CD4-positive, alpha-beta memory T cell (primary cell): ENCODE measurements at regions of chr4 and their contacts with region 1.

Region 1: GRCh38 chr4:66300336-66300934 is 630.1 kb upstream of the EPHA5 start:
- DNase-seq: no peak
- H3K4me3 ChIP-seq: no peak overlapping the region
- H3K4me3 Mint-ChIP-seq: no peak overlapping the region
- H3K27ac ChIP-seq: no peak overlapping the region
- H3K27ac Mint-ChIP-seq: no peak overlapping the region
- H3K4me1 ChIP-seq: no peaks in the 10 kb centered on the region
- H3K4me1 Mint-ChIP-seq: no peaks in the 10 kb centered on the region
- H3K27me3 ChIP-seq: no peaks in the 10 kb centered on the region
- H3K27me3 Mint-ChIP-seq: no peaks in the 10 kb centered on the region

Region 2: GRCh38 chr4:66223068-66223703 is 77.2 kb before region 1 on chr4:
- CTCF ChIA-PET with region 1: no interaction called
- POLR2A ChIA-PET with region 1: no interaction called
- intact Hi-C with region 1: loop called (anchors 10 kb)
- DNase-seq: no peak
- H3K4me3 ChIP-seq: no peak overlapping the region
- H3K4me3 Mint-ChIP-seq: no peak overlapping the region
- H3K27ac ChIP-seq: no peak overlapping the region
- H3K27ac Mint-ChIP-seq: no peak overlapping the region
- H3K4me1 ChIP-seq: no peaks in the 10 kb centered on the region
- H3K4me1 Mint-ChIP-seq: no peaks in the 10 kb centered on the region
- H3K27me3 ChIP-seq: no peaks in the 10 kb centered on the region
- H3K27me3 Mint-ChIP-seq: no peaks in the 10 kb centered on the region